Naive thymus-derived CD4-positive, alpha-beta T cell (primary cell): ENCODE measurements at regions of chr15 and their contacts with region 1.

Region 1: GRCh38 chr15:34367101-34368081 is at the start of gene LPCAT4:
- DNase-seq: peak; percentile 81 to 91 (median 89)
- ATAC-seq: peak; percentile 94
- H3K4me3 ChIP-seq: peak within 1 kb of the TSS; percentile 82
- H3K4me3 Mint-ChIP-seq: peak within 1 kb of the TSS; percentile 94 to 99 (median 96)
- H3K27ac ChIP-seq: peak within 1 kb of the TSS; percentile 88
- H3K27ac Mint-ChIP-seq: peak within 1 kb of the TSS; percentile 86 to 98 (median 94)
- H3K4me1 ChIP-seq: peaks cover 13 to 17% of the 10 kb centered on the region in 2 donors
- H3K4me1 Mint-ChIP-seq: peaks cover 5 to 45% (median 27%) of the 10 kb centered on the region in 7 donors
- H3K27me3 ChIP-seq: no peaks in the 10 kb centered on the region
- H3K27me3 Mint-ChIP-seq: no peaks in the 10 kb centered on the region
- total RNA-seq, gene LPCAT4: 40.0 to 95.5 (median 63.4) TPM

Region 2: GRCh38 chr15:34101366-34102175 is 265.8 kb before region 1 on chr15 and contains the starts of genes EMC7 and PGBD4:
- CTCF ChIA-PET with region 1: no interaction called
- POLR2A ChIA-PET with region 1: interaction called, 5 read pairs
- intact Hi-C with region 1: loop called (anchors 1 kb)
- DNase-seq: peak; percentile 98 to 99 (median 99)
- ATAC-seq: peak; percentile 99
- H3K4me3 ChIP-seq: peak within 1 kb of the TSS; percentile 66
- H3K4me3 Mint-ChIP-seq: peak within 1 kb of the TSS; percentile 91 to 100 (median 96)
- H3K27ac ChIP-seq: peak within 1 kb of the TSS; percentile 96
- H3K27ac Mint-ChIP-seq: peak within 1 kb of the TSS; percentile 97 to 100 (median 98)
- H3K4me1 ChIP-seq: peaks cover 16 to 27% of the 10 kb centered on the region in 2 donors
- H3K4me1 Mint-ChIP-seq: peaks cover 15 to 56% (median 45%) of the 10 kb centered on the region in 7 donors
- H3K27me3 ChIP-seq: no peaks in the 10 kb centered on the region
- H3K27me3 Mint-ChIP-seq: peaks cover 0 to 3% (median 0%) of the 10 kb centered on the region in 5 donors
- total RNA-seq, gene EMC7: 30.1 to 65.1 (median 36.9) TPM
- total RNA-seq, gene PGBD4: 3.2 to 6.5 (median 4.2) TPM

Region 3: GRCh38 chr15:34241372-34242330 is 125.7 kb before region 1 on chr15:
- CTCF ChIA-PET with region 1: interaction called, 68 read pairs
- POLR2A ChIA-PET with region 1: interaction called, 10 read pairs
- intact Hi-C with region 1: loop called (anchors 1 to 10 kb)
- DNase-seq: peak in 7 of 9 donors; percentile 38 to 65 (median 52)
- ATAC-seq: peak; percentile 91
- H3K4me3 ChIP-seq: no peak overlapping the region
- H3K4me3 Mint-ChIP-seq: no peak overlapping the region
- H3K27ac ChIP-seq: no peak overlapping the region
- H3K27ac Mint-ChIP-seq: peak overlapping the region in 7 of 9 donors; percentile 7 to 75 (median 47)
- H3K4me1 ChIP-seq: no peaks in the 10 kb centered on the region
- H3K4me1 Mint-ChIP-seq: peaks cover 0 to 13% (median 4%) of the 10 kb centered on the region in 7 donors
- H3K27me3 ChIP-seq: no peaks in the 10 kb centered on the region
- H3K27me3 Mint-ChIP-seq: no peaks in the 10 kb centered on the region

Region 4: GRCh38 chr15:34331809-34332208 is 35.6 kb before region 1 on chr15:
- CTCF ChIA-PET with region 1: interaction called, 27 read pairs
- POLR2A ChIA-PET with region 1: interaction called, 49 read pairs
- intact Hi-C with region 1: loop called in 1 of 2 experiments (anchors 1 kb)
- DNase-seq: peak in 2 of 9 donors; percentile 30 to 40
- ATAC-seq: peak; percentile 72
- H3K4me3 ChIP-seq: no peak overlapping the region
- H3K4me3 Mint-ChIP-seq: peak overlapping the region; percentile 17 to 99 (median 60)
- H3K27ac ChIP-seq: peak overlapping the region; percentile 92
- H3K27ac Mint-ChIP-seq: peak overlapping the region; percentile 77 to 98 (median 85)
- H3K4me1 ChIP-seq: peaks cover 47 to 64% of the 10 kb centered on the region in 2 donors
- H3K4me1 Mint-ChIP-seq: peaks cover 47 to 98% (median 82%) of the 10 kb centered on the region in 7 donors
- H3K27me3 ChIP-seq: no peaks in the 10 kb centered on the region
- H3K27me3 Mint-ChIP-seq: no peaks in the 10 kb centered on the region

Region 5: DNA sequence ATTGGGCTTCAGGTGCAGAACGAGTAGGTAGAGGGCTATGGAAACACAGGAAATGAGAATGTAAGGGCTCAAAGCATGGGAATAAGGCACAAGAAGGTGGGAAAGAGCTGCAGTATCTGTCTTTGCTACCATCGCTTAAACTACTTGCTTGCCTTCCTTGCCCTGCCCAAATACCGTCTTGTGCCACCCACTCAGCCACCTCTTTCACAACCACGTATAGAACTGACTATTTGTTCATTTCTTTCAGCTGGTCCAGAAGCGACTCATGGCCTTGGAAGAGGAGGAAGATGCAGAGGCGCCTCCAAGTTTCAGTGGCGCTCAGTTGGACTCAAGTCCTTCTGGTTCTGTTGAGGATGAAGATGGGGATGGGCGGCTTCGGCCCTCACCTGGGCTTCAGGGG is 12.2 kb before region 1 on chr15:
- CTCF ChIA-PET with region 1: interaction called, 8 read pairs
- POLR2A ChIA-PET with region 1: interaction called, 10 read pairs
- intact Hi-C with region 1: no loop called
- DNase-seq: no peak
- ATAC-seq: no peak
- H3K4me3 ChIP-seq: no peak overlapping the region
- H3K4me3 Mint-ChIP-seq: no peak overlapping the region
- H3K27ac ChIP-seq: no peak overlapping the region
- H3K27ac Mint-ChIP-seq: peak overlapping the region in 2 of 9 donors; percentile 53 to 74
- H3K4me1 ChIP-seq: no peaks in the 10 kb centered on the region
- H3K4me1 Mint-ChIP-seq: peaks cover 0 to 3% (median 0%) of the 10 kb centered on the region in 7 donors
- H3K27me3 ChIP-seq: no peaks in the 10 kb centered on the region
- H3K27me3 Mint-ChIP-seq: no peaks in the 10 kb centered on the region

Region 6: DNA sequence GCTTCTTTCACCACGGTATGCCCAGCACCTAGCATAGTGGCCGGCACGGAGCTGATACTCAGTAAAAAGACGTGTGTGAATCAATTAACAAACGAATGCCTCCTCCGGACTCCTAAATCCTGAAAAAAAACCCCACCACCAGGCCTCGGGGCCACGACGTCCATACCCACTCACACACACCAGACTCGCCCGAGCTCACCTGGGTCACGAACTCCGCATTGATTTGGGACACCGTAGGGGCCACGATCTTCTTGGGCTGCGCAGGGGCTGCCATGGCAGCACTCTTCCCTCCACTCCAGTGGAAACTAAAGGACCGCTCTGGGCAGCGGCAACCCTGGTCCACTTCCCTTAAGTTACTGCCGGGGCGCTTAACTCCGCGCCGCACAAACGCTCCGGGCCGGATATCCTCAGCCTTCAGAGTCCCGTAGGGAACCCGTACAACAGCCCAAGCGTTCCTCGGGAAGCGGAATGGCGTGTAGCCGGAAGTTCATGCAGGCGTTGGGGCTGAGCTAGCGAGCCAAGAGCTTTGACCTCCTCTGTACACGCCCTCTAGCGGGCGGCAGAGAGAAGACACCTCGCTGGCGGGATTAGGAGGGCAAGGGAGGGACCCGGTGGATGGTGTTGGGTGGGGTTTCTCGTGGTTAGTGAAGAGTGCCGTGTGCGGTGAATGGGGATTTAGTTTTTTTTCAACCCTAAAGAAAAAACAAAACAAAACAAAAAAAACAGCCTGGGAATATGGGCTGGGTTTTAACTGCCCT is 602.1 kb after region 1 on chr15 and contains the start of gene AQR:
- CTCF ChIA-PET with region 1: no interaction called
- POLR2A ChIA-PET with region 1: no interaction called
- intact Hi-C with region 1: loop called in 1 of 2 experiments (anchors 2 kb)
- DNase-seq: peak; percentile 74 to 91 (median 85)
- ATAC-seq: peak; percentile 98
- H3K4me3 ChIP-seq: peak within 1 kb of the TSS; percentile 99
- H3K4me3 Mint-ChIP-seq: peak within 1 kb of the TSS; percentile 92 to 99 (median 98)
- H3K27ac ChIP-seq: peak within 1 kb of the TSS; percentile 83
- H3K27ac Mint-ChIP-seq: peak within 1 kb of the TSS; percentile 88 to 100 (median 95)
- H3K4me1 ChIP-seq: peaks cover 10 to 15% of the 10 kb centered on the region in 2 donors
- H3K4me1 Mint-ChIP-seq: peaks cover 30 to 56% (median 51%) of the 10 kb centered on the region in 7 donors
- H3K27me3 ChIP-seq: no peaks in the 10 kb centered on the region
- H3K27me3 Mint-ChIP-seq: no peaks in the 10 kb centered on the region
- total RNA-seq, gene AQR: 38.1 to 43.5 (median 41.3) TPM

Region 7: GRCh38 chr15:35209838-35210237 is 842.4 kb after region 1 on chr15:
- CTCF ChIA-PET with region 1: no interaction called
- POLR2A ChIA-PET with region 1: no interaction called
- intact Hi-C with region 1: no loop called
- DNase-seq: no peak
- ATAC-seq: no peak
- H3K4me3 ChIP-seq: no peak overlapping the region
- H3K4me3 Mint-ChIP-seq: no peak overlapping the region
- H3K27ac ChIP-seq: no peak overlapping the region
- H3K27ac Mint-ChIP-seq: no peak overlapping the region
- H3K4me1 ChIP-seq: no peaks in the 10 kb centered on the region
- H3K4me1 Mint-ChIP-seq: no peaks in the 10 kb centered on the region
- H3K27me3 ChIP-seq: no peaks in the 10 kb centered on the region
- H3K27me3 Mint-ChIP-seq: no peaks in the 10 kb centered on the region